Posterior cingulate gyrus (tissue), 11 donors: ENCODE measurements at regions of chr2 and their contacts with region 1.

Region 1: GRCh38 chr2:12716282-12717190 is at the start of gene TRIB2:
- DNase-seq: peak; percentile 68 to 98 (median 84)

Region 2: DNA sequence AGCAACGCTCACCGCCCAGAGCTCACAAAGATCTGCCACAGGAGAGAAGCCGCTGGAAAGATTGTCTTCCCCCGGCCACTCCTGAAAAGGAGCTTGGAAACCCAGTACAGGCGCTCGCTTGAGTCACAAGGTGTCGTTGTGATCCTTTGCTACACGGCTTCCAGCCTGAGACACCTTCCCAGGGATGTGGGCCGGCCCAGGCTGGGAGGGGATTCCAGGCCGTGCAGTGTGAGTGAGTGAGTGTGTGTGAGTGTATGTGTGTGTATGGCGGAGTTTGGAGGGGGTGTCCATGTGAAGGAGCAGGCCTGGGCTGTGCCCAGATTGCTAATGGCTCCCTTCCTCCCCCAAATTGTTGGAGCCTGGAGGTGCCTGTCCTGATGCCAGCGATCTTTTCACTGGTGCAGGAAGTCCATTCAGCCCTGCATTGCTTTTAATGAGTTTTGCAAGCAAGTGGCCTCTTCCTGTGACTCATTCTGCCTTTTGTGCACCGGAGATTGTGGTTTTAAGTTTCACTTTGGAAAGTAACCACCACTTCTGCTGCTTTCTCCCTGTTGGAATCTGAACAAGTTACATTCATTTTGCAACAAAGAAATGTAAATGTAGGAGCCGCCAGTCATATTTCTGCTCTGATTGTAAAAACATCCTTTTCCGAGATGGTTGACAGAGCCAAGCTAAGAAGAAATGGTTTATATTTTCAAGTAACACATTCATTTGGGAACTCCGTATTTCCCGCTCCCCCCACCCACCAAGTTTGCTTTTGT is 886.4 kb before region 1 on chr2:
- intact Hi-C with region 1: loop called (anchors 5 kb)
- DNase-seq: peak; percentile 43 to 95 (median 74)

Region 3: DNA sequence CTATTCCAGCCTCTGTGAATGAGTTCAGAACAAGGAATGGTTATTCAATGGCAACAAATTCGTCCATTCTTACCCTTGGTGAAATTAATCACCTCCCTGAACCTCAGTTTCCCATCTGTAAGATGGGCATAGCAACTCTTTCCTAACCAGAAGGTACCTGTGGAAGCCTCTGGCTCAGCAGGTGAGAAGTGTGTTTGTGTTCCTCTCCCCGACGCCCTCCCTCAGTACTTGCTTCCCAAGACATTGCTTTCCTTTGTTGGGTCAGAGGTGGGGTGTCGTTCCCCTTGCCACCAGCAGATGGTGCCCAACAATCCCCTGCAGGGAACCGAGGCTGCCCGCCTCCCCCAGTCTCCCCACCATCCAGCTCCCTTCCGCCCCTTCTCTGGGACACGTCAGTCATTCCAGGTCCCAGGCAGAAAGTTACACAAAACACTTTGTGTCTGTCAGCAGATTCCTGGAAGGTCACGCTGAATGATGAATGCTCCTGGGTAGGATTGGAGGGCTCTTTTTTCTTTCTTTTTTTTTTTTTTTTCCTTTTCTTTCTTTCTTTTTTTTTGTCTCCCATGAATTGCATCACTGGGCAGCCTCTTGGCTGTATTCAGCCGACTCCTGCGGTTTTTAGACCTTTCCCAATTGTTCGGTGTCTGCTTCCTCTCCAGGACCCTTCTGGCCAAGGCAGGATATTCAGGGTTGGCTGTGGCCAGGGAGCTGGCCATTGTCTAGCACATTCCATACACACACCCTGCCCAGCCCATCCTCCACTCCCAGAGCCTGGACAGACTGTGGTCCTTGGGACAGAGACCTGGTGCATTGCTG is 852.8 kb before region 1 on chr2:
- intact Hi-C with region 1: loop called (anchors 1 kb)
- DNase-seq: peak; percentile 48 to 95 (median 80)

Region 4: GRCh38 chr2:12169721-12170120 is 546.8 kb before region 1 on chr2:
- intact Hi-C with region 1: loop called (anchors 2 kb)
- DNase-seq: peak in 1 of 10 donors; percentile 13

Region 5: DNA sequence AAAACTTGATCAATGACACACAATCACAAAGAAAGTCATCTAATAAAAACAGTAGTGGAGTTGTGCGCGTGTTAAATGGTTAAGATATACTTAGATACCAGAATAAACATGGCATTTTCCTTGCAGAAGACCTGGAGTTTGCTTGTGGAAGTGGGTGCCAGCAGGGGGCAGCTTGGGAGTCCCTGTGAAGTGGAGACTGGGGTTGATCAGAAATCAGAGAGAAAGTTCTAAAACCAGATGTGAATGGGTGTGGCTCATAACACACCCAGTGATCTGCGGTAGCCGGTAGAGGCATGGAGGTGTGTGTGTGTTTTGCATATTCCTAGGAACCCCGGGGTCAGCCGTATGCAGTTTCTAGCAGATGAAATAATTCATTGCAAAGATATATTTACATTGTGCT is 299.9 kb before region 1 on chr2:
- intact Hi-C with region 1: loop called (anchors 5 kb)
- DNase-seq: peak in 2 of 10 donors; percentile 14 to 70

Region 6: GRCh38 chr2:12665334-12665733 is 51.2 kb before region 1 on chr2:
- intact Hi-C with region 1: no loop called
- DNase-seq: no peak

Region 7: GRCh38 chr2:12733846-12734245 is 17.3 kb after region 1 on chr2:
- intact Hi-C with region 1: no loop called
- DNase-seq: peak in 7 of 10 donors; percentile 34 to 90 (median 54)

Region 8: DNA sequence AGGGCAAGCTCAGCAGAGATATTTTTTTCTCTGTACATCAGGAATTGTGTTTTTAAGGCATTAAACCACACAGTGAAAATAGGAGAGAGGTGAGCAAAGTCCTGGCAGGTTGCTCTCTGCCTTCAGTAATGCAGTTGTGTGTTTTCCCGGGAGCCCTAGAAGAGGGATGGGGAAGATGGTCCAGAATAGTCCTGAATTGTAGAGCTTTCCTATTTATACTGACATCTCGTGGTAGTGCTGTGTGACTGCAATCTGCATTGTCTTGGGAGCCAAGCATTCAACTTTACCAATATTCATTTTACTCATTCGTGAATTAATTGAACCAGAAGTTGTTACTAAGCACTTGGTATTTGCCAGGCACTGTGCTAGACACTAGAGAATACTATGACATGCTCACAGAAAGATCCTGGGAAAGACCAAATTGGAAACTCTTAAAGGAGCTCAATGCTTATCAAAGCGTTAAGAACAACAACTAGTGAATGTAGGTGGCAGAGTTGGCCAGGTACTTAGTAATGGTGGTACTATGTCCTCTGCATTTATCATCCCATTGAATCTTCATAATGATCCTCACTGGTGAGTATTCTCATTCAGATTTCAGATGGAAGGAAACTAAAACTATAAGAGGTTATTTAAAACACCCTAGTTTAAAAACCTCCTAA is 214.8 kb after region 1 on chr2:
- intact Hi-C with region 1: loop called (anchors 1 kb)
- DNase-seq: peak in 1 of 10 donors; percentile 11

Region 9: GRCh38 chr2:13006829-13007717 is 290.5 kb after region 1 on chr2:
- intact Hi-C with region 1: loop called (anchors 5 kb)
- DNase-seq: peak; percentile 17 to 92 (median 67)